A673 (cell line): ENCODE measurements at regions of chr10 and their contacts with region 1.

Region 1: GRCh38 chr10:114172216-114172615 is 1.8 kb downstream of the CCDC186 start:
- DNase-seq: no peak
- H3K4me3 ChIP-seq: peak overlapping the region; percentile 93
- H3K27ac ChIP-seq: no peak overlapping the region
- H3K4me1 ChIP-seq: peaks cover 7% of the 10 kb centered on the region
- H3K27me3 ChIP-seq: no peaks in the 10 kb centered on the region
- CTCF ChIP-seq: no peak

Region 2: DNA sequence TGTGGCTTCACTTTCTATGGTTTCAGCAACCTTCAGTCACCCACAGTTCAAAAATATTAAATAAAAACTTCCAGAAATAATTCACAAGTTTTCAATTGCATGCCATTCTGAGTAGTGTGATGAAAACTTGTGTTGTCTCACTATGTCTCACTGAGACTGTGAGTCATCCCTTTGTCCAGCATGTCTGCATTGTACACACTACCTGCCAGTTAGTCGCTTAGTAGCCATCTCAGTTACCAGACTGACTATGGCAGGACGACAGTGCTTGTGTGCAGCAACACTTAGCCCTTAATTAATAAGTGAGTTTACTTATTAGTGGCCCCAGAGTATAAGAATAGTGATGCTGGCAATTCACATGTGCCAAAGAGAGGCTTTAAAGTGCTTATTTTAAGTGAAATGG is 20.7 kb before region 1 on chr10:
- CTCF ChIA-PET with region 1: no interaction called
- POLR2A ChIA-PET with region 1: no interaction called
- intact Hi-C with region 1: no loop called
- DNase-seq: no peak
- H3K4me3 ChIP-seq: no peak overlapping the region
- H3K27ac ChIP-seq: no peak overlapping the region
- H3K4me1 ChIP-seq: no peaks in the 10 kb centered on the region
- H3K27me3 ChIP-seq: no peaks in the 10 kb centered on the region
- CTCF ChIP-seq: no peak

Region 3: GRCh38 chr10:114188001-114188400 is 15.8 kb after region 1 on chr10:
- CTCF ChIA-PET with region 1: no interaction called
- POLR2A ChIA-PET with region 1: no interaction called
- intact Hi-C with region 1: no loop called
- DNase-seq: no peak
- H3K4me3 ChIP-seq: no peak overlapping the region
- H3K27ac ChIP-seq: no peak overlapping the region
- H3K4me1 ChIP-seq: no peaks in the 10 kb centered on the region
- H3K27me3 ChIP-seq: no peaks in the 10 kb centered on the region
- CTCF ChIP-seq: no peak

Region 4: GRCh38 chr10:114242235-114242634 is 70.0 kb after region 1 on chr10:
- CTCF ChIA-PET with region 1: no interaction called
- POLR2A ChIA-PET with region 1: interaction called, 10 read pairs
- intact Hi-C with region 1: no loop called
- DNase-seq: no peak
- H3K4me3 ChIP-seq: no peak overlapping the region
- H3K27ac ChIP-seq: no peak overlapping the region
- H3K4me1 ChIP-seq: no peaks in the 10 kb centered on the region
- H3K27me3 ChIP-seq: peaks cover 85% of the 10 kb centered on the region
- CTCF ChIP-seq: no peak

Region 5: DNA sequence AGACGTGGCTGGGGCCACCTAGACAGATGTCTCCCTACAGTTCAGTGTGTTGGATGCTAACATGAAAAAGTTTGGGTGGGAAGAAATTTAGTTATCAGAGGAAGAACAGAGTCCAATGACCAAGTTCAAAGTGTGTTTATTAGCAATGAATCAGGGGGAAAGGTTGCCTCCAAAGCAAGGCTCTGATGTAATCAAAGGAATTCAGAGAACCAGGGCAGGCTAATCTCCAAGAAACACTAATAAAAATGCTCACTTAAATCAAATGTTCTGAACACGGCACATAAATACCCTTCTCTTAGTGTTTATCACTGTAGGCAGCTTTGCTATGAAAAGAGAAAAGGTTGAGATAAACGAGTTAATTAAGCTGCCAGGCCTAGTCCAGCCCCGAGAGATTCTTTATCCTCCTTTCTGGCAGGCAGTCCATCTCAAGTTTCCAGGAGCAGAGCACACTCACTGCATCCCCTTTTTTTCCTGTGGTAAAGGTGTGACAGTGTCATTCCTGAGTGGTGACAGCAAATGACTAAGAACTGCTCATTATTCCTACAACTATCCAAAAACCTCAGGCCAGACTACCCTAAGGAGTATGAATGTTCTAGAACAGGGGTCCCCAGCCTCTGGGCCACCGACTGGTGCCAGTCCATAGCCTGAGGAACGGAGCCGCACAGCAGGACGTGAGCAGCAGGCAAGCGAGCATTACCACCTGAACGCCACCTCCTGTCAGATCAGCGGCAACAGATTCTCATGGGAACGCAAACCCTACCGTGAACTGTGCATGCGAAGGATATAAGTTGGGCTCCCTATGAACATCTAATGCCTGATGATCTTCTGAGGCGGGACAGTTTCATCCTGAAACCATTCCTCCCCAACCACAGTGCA is 582.5 kb after region 1 on chr10:
- CTCF ChIA-PET with region 1: no interaction called
- POLR2A ChIA-PET with region 1: no interaction called
- intact Hi-C with region 1: no loop called
- DNase-seq: no peak
- H3K4me3 ChIP-seq: no peak overlapping the region
- H3K27ac ChIP-seq: no peak overlapping the region
- H3K4me1 ChIP-seq: no peaks in the 10 kb centered on the region
- H3K27me3 ChIP-seq: peaks cover 31% of the 10 kb centered on the region
- CTCF ChIP-seq: no peak